ENCODE measurements at regions of chr15 and their contacts with region 1.

Region 1: GRCh38 chr15:72783563-72784237 is at the start of gene ADPGK:
- DNase-seq: peak; percentile 68 to 86
- ATAC-seq: peak; percentile 87
- H3K4me3 ChIP-seq: peak within 1 kb of the TSS; percentile 86 to 99 (median 94)
- H3K27ac ChIP-seq: peak within 1 kb of the TSS; percentile 94 to 96 (median 96)
- H3K4me1 ChIP-seq: peaks cover 20 to 35% of the 10 kb centered on the region in 2 donors
- H3K27me3 ChIP-seq: no peaks in the 10 kb centered on the region
- CTCF ChIP-seq: peak in 2 of 5 experiments; percentile 52 to 61
- POLR2A ChIP-seq: peak; percentile 84 to 94
- total RNA-seq, gene ADPGK: 13.4 to 23.2 (median 17.2) TPM

Region 2: GRCh38 chr15:72585476-72586082 is 198.1 kb before region 1 on chr15:
- in situ Hi-C with region 1: no loop called
- intact Hi-C with region 1: no loop called
- DNase-seq: no peak
- ATAC-seq: no peak
- H3K4me3 ChIP-seq: no peak overlapping the region
- H3K27ac ChIP-seq: no peak overlapping the region
- H3K4me1 ChIP-seq: no peaks in the 10 kb centered on the region
- H3K27me3 ChIP-seq: no peaks in the 10 kb centered on the region
- CTCF ChIP-seq: no peak
- POLR2A ChIP-seq: no peak

Region 3: DNA sequence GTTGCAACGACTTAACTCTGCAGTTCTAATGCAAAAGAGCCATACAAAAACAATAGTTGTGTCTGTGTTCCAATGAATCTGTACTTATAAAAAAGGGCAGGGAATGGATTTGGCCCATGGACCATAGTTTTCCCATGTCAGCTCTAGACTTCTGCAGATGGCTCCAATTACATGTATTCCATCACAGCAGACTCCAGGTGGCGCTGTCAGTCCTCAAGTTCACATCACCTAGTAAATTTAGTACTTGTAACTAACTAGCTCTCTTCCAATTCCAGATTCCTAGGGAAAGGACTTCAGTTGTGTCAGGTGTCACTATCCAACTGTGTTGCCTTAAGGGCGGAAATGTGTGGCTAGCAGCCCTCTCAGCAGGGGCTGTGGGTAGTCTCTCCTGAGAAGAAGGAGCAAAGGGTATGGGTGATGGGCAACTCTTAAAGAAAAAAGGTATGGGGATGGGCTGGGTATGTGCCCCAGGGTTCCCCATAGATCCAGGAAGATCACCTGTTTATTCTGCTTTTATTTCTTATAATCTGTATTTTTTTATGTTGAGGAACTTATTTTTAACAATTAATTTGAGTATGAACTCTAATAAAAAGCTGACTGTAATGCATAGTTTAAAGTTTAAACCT is 61.5 kb before region 1 on chr15:
- in situ Hi-C with region 1: no loop called
- intact Hi-C with region 1: loop called (anchors 2 kb)
- DNase-seq: peak; percentile 2 to 66
- ATAC-seq: peak in 1 of 2 donors; percentile 76
- H3K4me3 ChIP-seq: no peak overlapping the region
- H3K27ac ChIP-seq: no peak overlapping the region
- H3K4me1 ChIP-seq: peaks cover 4 to 9% of the 10 kb centered on the region in 2 donors
- H3K27me3 ChIP-seq: no peaks in the 10 kb centered on the region
- CTCF ChIP-seq: peak; percentile 56 to 74 (median 58)
- POLR2A ChIP-seq: no peak

Region 4: DNA sequence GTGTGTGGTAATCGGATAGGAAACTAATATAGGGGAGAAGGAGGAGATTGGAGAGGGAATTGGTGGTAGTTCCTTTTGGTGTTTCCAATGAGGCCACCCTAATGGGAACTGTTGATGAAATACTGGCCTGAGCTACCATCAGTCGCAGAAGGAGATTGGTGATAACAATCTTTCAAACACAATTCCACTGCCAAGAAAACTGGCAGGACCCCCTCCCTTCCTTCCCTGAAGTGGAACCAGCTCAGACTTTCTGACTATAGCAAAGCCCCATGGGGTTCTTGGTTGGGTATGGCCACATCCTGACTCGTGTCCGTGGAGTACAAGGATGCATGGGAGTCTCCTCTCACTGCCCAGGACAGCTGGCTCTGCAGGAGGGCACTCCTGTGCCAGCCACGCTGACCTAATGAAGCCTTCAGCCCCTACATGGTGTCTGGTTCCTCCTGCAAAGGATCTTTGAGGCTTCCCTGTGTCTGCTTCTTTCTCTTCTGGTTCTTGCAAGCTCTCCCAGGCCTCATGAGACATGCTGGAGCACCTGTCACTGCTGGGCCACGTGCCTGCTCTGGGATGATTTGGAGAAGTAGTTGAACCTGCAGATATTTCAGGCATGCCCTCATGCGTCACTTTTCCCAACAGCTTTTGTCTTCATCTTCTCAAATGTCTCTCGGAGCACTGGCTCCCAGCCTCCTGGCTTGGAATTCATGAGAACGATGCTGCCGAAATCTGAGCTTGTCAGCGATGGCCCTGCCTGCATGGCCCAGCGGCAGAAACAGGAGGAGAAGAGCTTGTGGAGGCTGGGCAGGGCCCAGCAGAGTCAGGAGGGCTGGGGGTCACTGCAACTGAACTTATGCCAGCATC is 89.9 kb after region 1 on chr15:
- in situ Hi-C with region 1: no loop called
- intact Hi-C with region 1: loop called (anchors 2 kb)
- DNase-seq: peak; percentile 94 to 99
- ATAC-seq: peak; percentile 82 to 84
- H3K4me3 ChIP-seq: peak overlapping the region in 1 of 4 donors; percentile 1
- H3K27ac ChIP-seq: peak overlapping the region; percentile 87 to 93 (median 90)
- H3K4me1 ChIP-seq: peaks cover 56 to 62% of the 10 kb centered on the region in 2 donors
- H3K27me3 ChIP-seq: no peaks in the 10 kb centered on the region
- CTCF ChIP-seq: no peak
- POLR2A ChIP-seq: peak; percentile 32 to 42

Region 5: DNA sequence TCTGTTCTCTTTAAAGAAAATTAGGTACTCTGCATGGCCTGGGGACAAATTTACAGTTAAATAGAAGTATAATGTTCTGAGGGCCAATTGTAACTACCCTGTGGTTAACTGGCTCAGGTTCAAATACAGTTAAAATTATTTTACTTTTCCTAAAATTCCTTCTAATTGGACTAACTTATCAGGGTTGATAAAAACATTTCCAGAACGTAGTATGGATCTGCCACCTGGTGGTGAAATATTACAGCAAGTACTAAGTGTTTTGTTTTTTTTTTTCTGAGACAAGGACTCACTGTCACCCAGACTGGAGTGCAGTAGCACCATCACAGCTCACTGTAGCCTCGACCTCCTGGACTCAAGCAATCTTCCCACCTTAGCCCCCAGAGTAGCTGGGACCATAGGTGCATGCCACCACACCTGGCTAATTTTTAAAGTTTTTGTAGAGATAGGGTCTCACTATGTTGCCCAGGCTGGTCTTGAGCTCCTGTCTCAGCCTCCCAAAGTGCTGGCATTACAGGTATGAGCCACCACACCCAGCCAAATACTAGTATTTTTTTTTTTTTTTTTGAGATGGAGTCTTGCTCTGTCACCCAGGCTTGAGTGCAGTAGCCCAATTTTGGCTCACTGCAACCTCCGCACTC is 297.7 kb after region 1 on chr15:
- in situ Hi-C with region 1: loop called in 1 of 4 experiments (anchors 5 kb)
- intact Hi-C with region 1: loop called (anchors 2 kb)
- DNase-seq: no peak
- ATAC-seq: peak; percentile 65 to 79
- H3K4me3 ChIP-seq: no peak overlapping the region
- H3K27ac ChIP-seq: no peak overlapping the region
- H3K4me1 ChIP-seq: peaks cover 29 to 35% of the 10 kb centered on the region in 2 donors
- H3K27me3 ChIP-seq: no peaks in the 10 kb centered on the region
- CTCF ChIP-seq: peak; percentile 63 to 84 (median 73)
- POLR2A ChIP-seq: no peak

Region 6: DNA sequence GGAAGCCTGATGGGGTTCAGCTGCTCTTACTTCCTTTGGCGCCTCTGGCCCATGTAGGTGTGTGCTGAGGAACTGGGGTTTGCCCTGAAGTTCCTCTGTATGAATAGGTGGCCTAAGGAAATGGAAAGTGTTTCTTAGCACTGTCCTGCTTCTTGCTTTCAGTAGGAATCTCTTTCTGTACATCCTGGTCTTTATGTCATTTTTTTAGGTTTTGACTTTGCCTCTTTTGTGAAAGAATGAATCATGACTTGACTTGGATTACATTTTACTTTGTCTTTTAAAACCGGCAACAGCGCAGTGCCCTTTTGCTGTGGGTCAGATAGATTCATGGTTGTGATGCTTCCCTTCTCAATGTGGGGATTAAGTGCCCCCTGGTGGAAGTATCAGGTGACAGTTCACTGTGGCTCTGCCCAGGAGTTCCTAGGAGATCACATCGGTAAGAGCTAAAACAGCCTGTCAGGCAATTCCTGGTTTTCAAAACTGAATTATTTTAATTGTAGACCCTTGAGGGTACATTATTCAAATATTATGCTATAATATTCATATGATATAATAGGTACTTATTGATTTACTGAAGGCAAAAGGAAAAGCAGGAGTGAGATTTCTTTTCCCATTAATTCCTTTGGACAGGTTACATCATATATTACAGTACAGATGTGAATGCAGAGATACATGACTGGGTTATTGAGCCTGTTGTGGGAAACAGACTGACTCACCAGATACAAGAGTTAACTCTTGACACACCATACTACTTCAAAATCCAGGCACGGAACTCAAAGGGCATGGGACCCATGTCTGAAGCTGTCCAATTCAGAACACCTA is 489.7 kb after region 1 on chr15:
- in situ Hi-C with region 1: no loop called
- intact Hi-C with region 1: loop called (anchors 5 kb)
- DNase-seq: peak; percentile 5 to 48
- ATAC-seq: peak; percentile 69 to 88
- H3K4me3 ChIP-seq: no peak overlapping the region
- H3K27ac ChIP-seq: no peak overlapping the region
- H3K4me1 ChIP-seq: peaks cover 0 to 1% of the 10 kb centered on the region in 2 donors
- H3K27me3 ChIP-seq: no peaks in the 10 kb centered on the region
- CTCF ChIP-seq: peak; percentile 46 to 80 (median 57)
- POLR2A ChIP-seq: no peak